Body of pancreas (tissue), 4 donors: ENCODE measurements at regions of chr10 and their contacts with region 1.

Region 1: DNA sequence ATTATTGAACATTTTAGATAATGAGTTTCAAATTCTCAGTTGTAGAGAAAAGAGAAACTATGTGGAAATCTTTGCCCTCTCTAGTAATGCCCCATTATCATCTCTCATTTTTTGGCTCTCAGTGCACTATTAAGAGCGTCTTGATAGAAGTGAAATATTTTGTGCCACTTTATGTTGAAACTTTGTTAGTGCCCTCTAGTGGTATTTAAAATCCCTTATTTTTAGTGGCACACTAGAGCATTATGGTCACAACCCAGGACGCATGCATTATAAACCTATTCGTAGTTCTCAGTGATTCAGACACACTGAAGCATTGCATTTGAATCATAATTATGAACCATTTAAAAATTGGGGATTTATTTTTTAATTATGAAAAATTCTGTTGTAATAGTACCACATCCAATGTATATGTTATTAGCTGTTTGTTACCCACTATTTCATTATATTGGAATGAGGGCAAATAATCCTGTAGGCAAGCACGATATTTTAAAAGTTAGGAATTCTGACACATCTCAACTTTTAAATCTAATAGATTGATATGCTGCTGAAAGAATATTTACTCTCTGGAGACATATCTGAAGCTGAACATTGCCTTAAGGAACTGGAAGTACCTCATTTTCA is 21.9 kb downstream of the PDCD4 start:
- DNase-seq: no peak
- ATAC-seq: peak; percentile 49
- H3K4me3 ChIP-seq: no peak overlapping the region
- H3K27ac ChIP-seq: peak overlapping the region in 1 of 4 donors; percentile 49
- H3K4me1 ChIP-seq: peaks cover 87% of the 10 kb centered on the region
- H3K27me3 ChIP-seq: no peaks in the 10 kb centered on the region
- CTCF ChIP-seq: peak; percentile 31 to 66 (median 56)
- POLR2A ChIP-seq: no peak

Region 2: GRCh38 chr10:110803830-110804338 is 89.8 kb before region 1 on chr10:
- intact Hi-C with region 1: loop called (anchors 10 kb)
- DNase-seq: peak; percentile 61 to 78 (median 70)
- ATAC-seq: peak; percentile 71
- H3K4me3 ChIP-seq: no peak overlapping the region
- H3K27ac ChIP-seq: peak overlapping the region; percentile 21 to 81 (median 70)
- H3K4me1 ChIP-seq: peaks cover 53% of the 10 kb centered on the region
- H3K27me3 ChIP-seq: no peaks in the 10 kb centered on the region
- CTCF ChIP-seq: peak; percentile 47 to 84 (median 75)
- POLR2A ChIP-seq: peak in 1 of 3 donors; percentile 8